Posterior cingulate gyrus (tissue), 11 donors: ENCODE measurements at regions of chr3 and their contacts with region 1.

Region 1: GRCh38 chr3:173411375-173411973 is 13.9 kb downstream of the NLGN1 start:
- DNase-seq: peak in 4 of 10 donors; percentile 12 to 52 (median 32)

Region 2: DNA sequence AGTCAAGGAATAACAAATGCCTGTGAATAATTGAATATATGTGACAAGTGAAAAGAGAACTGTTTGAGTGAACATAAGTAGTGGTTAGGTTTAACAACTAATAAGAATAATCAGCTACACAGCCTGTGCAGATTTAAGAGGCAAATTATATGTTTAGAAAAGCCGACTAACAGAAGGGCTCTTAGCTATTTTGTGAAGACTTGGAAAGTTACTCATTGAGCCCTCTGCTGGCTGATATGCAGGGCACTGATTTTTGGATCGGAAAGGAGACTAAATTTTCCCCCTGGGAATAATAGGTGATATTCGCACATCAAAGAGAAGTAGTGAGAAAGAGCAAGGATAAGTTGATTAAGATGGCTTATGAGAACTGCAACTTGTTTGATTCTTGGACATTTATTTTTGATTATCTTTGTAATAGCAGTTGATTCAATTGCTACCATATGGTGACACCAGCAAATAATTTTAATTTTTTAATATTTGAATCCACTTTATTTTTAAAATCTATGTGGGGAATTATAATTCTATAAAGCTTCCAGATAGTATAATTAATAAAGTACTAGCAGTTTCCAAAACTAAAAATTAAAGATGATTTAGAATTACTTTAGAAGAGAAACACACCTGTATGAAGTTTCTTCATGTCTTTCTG is 142.3 kb after region 1 on chr3:
- intact Hi-C with region 1: loop called (anchors 5 kb)
- DNase-seq: peak in 2 of 10 donors; percentile 9 to 32

Region 3: DNA sequence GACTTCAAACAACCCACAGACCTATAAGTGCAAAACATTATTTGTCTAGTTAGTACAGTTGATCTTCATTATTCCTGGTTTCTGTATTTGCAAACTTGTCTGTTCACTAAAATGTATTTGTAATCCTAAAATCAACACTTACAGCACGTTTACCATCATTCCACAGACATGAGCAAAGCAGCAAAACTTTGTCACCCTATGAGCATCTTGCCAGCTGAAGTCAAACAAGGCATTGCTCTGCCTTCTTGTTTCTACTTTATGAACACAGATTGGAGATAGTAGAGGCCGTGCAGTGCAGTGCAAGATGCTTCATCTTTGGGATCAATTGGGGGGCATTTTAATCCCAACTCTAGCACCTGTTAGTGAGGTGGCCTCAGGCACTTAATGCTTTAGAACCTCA is 188.2 kb after region 1 on chr3:
- intact Hi-C with region 1: no loop called
- DNase-seq: no peak

Region 4: DNA sequence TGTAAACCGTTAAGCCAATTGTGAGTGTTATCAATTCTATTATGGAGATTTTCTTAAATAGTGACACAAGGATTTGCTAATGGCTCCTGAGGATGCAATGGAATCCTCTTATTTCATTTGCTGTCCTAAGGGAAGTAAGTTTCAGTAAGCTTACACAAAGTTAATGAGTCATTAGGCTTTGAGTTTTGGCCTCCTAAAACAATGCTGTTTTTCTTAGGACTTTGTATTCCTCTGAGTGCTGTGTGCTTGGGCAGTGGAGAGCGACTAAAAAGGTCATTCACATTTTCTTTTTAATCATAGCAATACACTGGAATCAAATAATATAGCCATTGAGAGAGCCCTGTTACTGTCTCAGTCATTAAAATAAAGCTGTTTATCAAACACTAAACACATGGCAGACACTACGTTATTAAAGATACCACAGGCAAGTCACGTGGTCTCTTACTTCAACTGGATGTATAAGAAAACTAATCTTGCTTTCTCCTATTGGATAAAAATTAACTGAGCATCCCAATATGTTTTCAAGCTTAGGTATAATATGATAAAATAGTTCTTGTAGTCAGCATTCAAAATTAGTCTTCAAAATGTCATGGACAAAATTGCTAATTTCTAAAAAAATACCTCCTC is 276.9 kb after region 1 on chr3:
- intact Hi-C with region 1: no loop called
- DNase-seq: no peak